ENCODE measurements at regions of chr22 and their contacts with region 1.

Region 1: GRCh38 chr22:36117053-36117554 is 43.5 kb downstream of the APOL3 start:
- DNase-seq: no peak
- H3K4me3 ChIP-seq: no peak overlapping the region
- H3K27ac ChIP-seq: no peak overlapping the region
- H3K4me1 ChIP-seq: peaks cover 9% of the 10 kb centered on the region
- H3K27me3 ChIP-seq: no peaks in the 10 kb centered on the region
- CTCF ChIP-seq: no peak

Region 2: DNA sequence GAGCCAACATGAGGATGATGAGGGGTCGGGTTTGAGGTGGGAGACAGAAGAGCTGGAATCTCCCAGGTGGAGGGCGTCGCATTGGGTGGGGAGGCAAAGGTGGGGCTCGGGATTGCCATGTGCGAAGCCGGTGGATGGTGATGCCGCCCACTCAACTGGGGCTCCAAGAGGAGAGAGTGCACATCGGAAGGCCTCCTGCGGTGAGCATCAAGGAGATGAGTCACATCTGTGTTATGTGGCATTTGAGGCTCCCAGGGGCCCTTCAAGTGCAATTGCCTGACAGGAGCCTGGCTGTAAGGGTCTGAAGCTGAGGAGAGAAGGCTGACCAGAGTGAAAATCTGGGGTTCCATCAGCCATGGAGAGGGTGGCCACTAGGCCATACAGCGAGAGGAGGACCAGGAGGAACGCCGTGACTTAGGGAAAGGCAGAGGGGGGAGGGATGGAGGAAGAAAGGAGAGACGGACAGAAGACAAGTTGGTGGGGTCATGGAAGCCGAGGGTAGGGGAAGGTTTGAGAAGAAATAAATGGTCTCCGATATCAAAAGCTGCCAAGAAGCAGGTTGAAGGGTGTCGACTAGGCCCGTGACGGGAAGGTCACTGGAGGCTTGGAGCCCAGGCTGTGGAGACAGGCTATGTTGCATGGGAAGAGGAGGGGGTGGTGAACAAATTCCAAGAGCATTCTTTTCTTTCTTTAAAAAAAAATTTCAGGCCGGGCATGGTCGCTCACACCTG is 555.1 kb before region 1 on chr22:
- intact Hi-C with region 1: no loop called
- DNase-seq: no peak
- H3K4me3 ChIP-seq: no peak overlapping the region
- H3K27ac ChIP-seq: no peak overlapping the region
- H3K4me1 ChIP-seq: peaks cover 22% of the 10 kb centered on the region
- H3K27me3 ChIP-seq: peaks cover 9% of the 10 kb centered on the region
- CTCF ChIP-seq: no peak

Region 3: GRCh38 chr22:35930933-35931332 is 186.2 kb before region 1 on chr22:
- intact Hi-C with region 1: loop called (anchors 5 kb)
- DNase-seq: no peak
- H3K4me3 ChIP-seq: no peak overlapping the region
- H3K27ac ChIP-seq: no peak overlapping the region
- H3K4me1 ChIP-seq: peaks cover 16% of the 10 kb centered on the region
- H3K27me3 ChIP-seq: no peaks in the 10 kb centered on the region
- CTCF ChIP-seq: peak; percentile 81

Measured in left ventricle myocardium inferior (tissue), 1 donor.